Endothelial cell of umbilical vein (primary cell): ENCODE measurements at regions of chr6 and their contacts with region 1.

Region 1: GRCh38 chr6:15962449-15962764 is 166.5 kb upstream of the MYLIP start:
- DNase-seq: peak; percentile 92
- H3K4me3 ChIP-seq: no peak overlapping the region
- H3K27ac ChIP-seq: peak overlapping the region; percentile 91
- H3K4me1 ChIP-seq: peaks cover 20% of the 10 kb centered on the region
- H3K27me3 ChIP-seq: no peaks in the 10 kb centered on the region
- CTCF ChIP-seq: no peak
- POLR2A ChIP-seq: peak; percentile 58

Region 2: DNA sequence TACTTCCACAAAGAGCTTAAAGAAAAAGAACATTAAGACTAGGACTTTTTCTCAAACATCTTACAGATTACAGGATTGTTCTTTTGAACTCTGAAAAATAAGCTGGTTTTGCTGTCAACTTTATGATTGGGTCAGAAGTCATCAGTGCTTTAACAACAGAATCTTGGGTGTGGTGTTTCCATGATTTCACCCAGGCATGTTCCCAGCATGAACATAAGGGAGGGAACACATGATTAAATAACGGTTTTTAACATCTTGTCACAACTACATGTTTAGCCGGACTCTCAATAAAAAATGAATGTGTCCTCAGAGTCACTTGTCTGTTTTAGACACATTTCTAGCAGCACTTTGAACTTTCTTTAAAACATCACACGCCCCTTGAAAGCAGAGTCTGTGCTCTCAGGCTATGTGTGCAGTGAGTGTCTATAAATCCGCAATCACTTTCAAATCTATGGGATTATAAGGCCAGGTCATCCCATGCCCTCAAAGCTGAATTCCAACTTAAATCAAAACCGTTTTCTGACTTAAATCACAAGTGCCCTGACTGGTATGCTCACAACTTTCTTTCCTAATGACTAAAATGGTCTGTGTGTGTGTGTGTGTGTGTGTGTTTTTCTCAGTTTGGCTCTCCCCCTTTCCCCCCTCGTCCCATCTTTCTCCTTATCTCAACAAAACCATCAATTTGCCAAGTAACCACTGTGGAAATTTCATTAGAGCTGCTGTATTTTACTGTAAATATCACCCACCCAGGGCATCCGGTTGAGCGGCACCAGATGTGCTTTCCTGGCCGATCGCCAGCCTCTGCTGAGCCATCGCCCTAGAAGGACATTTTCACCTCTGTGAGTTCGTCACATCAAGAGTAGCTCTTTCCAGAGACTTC is 82.8 kb before region 1 on chr6:
- CTCF ChIA-PET with region 1: no interaction called
- POLR2A ChIA-PET with region 1: no interaction called
- dilution Hi-C with region 1: no loop called
- intact Hi-C with region 1: loop called (anchors 5 kb)
- DNase-seq: peak; percentile 87
- H3K4me3 ChIP-seq: no peak overlapping the region
- H3K27ac ChIP-seq: no peak overlapping the region
- H3K4me1 ChIP-seq: peaks cover 21% of the 10 kb centered on the region
- H3K27me3 ChIP-seq: no peaks in the 10 kb centered on the region
- CTCF ChIP-seq: no peak
- POLR2A ChIP-seq: no peak

Region 3: GRCh38 chr6:15893556-15894268 is 68.7 kb before region 1 on chr6:
- CTCF ChIA-PET with region 1: interaction called, 6 read pairs
- POLR2A ChIA-PET with region 1: no interaction called
- dilution Hi-C with region 1: no loop called
- intact Hi-C with region 1: loop called (anchors 1 kb)
- DNase-seq: peak; percentile 50
- H3K4me3 ChIP-seq: no peak overlapping the region
- H3K27ac ChIP-seq: no peak overlapping the region
- H3K4me1 ChIP-seq: peaks cover 18% of the 10 kb centered on the region
- H3K27me3 ChIP-seq: no peaks in the 10 kb centered on the region
- CTCF ChIP-seq: peak; percentile 34 to 42
- POLR2A ChIP-seq: no peak

Region 4: GRCh38 chr6:15996030-15996429 is 33.6 kb after region 1 on chr6:
- CTCF ChIA-PET with region 1: no interaction called
- POLR2A ChIA-PET with region 1: no interaction called
- dilution Hi-C with region 1: no loop called
- intact Hi-C with region 1: loop called (anchors 1 kb)
- DNase-seq: peak; percentile 48
- H3K4me3 ChIP-seq: no peak overlapping the region
- H3K27ac ChIP-seq: no peak overlapping the region
- H3K4me1 ChIP-seq: peaks cover 33% of the 10 kb centered on the region
- H3K27me3 ChIP-seq: no peaks in the 10 kb centered on the region
- CTCF ChIP-seq: no peak
- POLR2A ChIP-seq: no peak

Region 5: GRCh38 chr6:16243055-16243454 is 280.6 kb after region 1 on chr6:
- CTCF ChIA-PET with region 1: no interaction called
- POLR2A ChIA-PET with region 1: no interaction called
- dilution Hi-C with region 1: no loop called
- intact Hi-C with region 1: no loop called
- DNase-seq: peak; percentile 44
- H3K4me3 ChIP-seq: no peak overlapping the region
- H3K27ac ChIP-seq: no peak overlapping the region
- H3K4me1 ChIP-seq: peaks cover 14% of the 10 kb centered on the region
- H3K27me3 ChIP-seq: no peaks in the 10 kb centered on the region
- CTCF ChIP-seq: no peak
- POLR2A ChIP-seq: no peak

Region 6: DNA sequence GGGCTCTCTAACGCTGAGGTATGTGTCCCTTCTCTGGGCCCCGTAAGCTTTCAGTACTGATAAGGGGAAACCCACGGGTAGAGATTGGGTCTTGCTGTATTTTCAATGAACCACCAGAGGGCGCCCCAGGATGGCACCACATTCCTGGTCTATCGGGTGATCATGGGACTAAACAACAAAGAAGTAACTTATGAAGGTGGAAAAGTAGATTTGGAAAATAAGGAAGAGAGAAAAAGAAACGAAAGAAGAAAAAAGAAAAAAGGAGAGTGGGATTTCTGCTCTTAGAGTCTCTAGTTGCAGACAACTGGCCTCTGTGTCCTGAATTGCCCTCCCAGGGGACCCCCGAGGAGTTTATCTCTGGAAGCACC is 369.8 kb after region 1 on chr6:
- CTCF ChIA-PET with region 1: no interaction called
- POLR2A ChIA-PET with region 1: no interaction called
- dilution Hi-C with region 1: no loop called
- intact Hi-C with region 1: no loop called
- DNase-seq: peak; percentile 89
- H3K4me3 ChIP-seq: no peak overlapping the region
- H3K27ac ChIP-seq: no peak overlapping the region
- H3K4me1 ChIP-seq: peaks cover 24% of the 10 kb centered on the region
- H3K27me3 ChIP-seq: no peaks in the 10 kb centered on the region
- CTCF ChIP-seq: peak; percentile 82
- POLR2A ChIP-seq: no peak